ENCODE measurements at regions of chr22 and their contacts with region 1.

Region 1: GRCh38 chr22:32823024-32823730 is 21.7 kb downstream of the TIMP3 start:
- DNase-seq: no peak
- ATAC-seq: no peak
- H3K4me3 ChIP-seq: no peak overlapping the region
- H3K27ac ChIP-seq: peak overlapping the region in 6 of 10 donors; percentile 10 to 74 (median 36)
- H3K4me1 ChIP-seq: peaks cover 53 to 99% (median 92%) of the 10 kb centered on the region in 9 donors
- H3K27me3 ChIP-seq: no peaks in the 10 kb centered on the region
- CTCF ChIP-seq: peak in 7 of 9 donors; percentile 44 to 67 (median 45)

Region 2: DNA sequence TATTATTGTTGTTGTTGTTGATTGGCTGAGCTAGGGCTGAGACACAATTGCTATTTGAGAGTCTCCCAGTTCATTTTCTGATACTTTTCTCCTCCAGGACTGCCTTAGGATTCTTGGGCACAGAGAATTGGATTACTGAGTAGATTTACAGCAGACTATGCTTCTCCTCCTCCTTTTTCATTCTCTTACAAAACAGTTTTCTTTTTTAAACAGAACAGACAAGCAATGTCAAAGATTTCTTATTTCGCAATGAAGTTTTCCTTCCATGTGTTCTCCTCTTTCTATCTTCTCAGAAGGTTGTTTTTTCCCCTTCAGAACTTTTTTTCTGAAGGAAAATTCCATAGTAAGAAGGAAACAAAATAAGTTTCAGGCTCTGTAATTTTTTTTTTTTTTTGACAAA is 41.5 kb before region 1 on chr22:
- intact Hi-C with region 1: no loop called
- DNase-seq: no peak
- ATAC-seq: peak in 1 of 8 donors; percentile 20
- H3K4me3 ChIP-seq: no peak overlapping the region
- H3K27ac ChIP-seq: no peak overlapping the region
- H3K4me1 ChIP-seq: peaks cover 0 to 9% (median 0%) of the 10 kb centered on the region in 9 donors
- H3K27me3 ChIP-seq: no peaks in the 10 kb centered on the region
- CTCF ChIP-seq: no peak

Region 3: GRCh38 chr22:32800994-32801942 is 21.9 kb before region 1 on chr22 and contains the start of gene TIMP3:
- intact Hi-C with region 1: no loop called
- DNase-seq: peak; percentile 92 to 94
- ATAC-seq: peak; percentile 86 to 93 (median 90)
- H3K4me3 ChIP-seq: peak within 1 kb of the TSS; percentile 78 to 100 (median 97)
- H3K27ac ChIP-seq: peak within 1 kb of the TSS; percentile 84 to 96 (median 90)
- H3K4me1 ChIP-seq: peaks cover 6 to 69% (median 44%) of the 10 kb centered on the region in 9 donors
- H3K27me3 ChIP-seq: peaks cover 0 to 24% (median 0%) of the 10 kb centered on the region in 7 donors
- CTCF ChIP-seq: peak in 3 of 9 donors; percentile 20 to 27 (median 22)
- total RNA-seq, gene TIMP3: 91.9 to 380 (median 166) TPM

Region 4: GRCh38 chr22:32850591-32851517 is 27.7 kb after region 1 on chr22:
- intact Hi-C with region 1: loop called in 1 of 10 experiments (anchors 5 kb)
- DNase-seq: peak; percentile 78 to 80
- ATAC-seq: peak; percentile 20 to 73 (median 60)
- H3K4me3 ChIP-seq: no peak overlapping the region
- H3K27ac ChIP-seq: peak overlapping the region; percentile 67 to 90 (median 73)
- H3K4me1 ChIP-seq: peaks cover 59 to 100% (median 99%) of the 10 kb centered on the region in 9 donors
- H3K27me3 ChIP-seq: no peaks in the 10 kb centered on the region
- CTCF ChIP-seq: no peak

Region 5: GRCh38 chr22:32880061-32880460 is 56.9 kb after region 1 on chr22:
- intact Hi-C with region 1: no loop called
- DNase-seq: no peak
- ATAC-seq: peak in 1 of 8 donors; percentile 21
- H3K4me3 ChIP-seq: no peak overlapping the region
- H3K27ac ChIP-seq: no peak overlapping the region
- H3K4me1 ChIP-seq: peaks cover 4 to 29% (median 14%) of the 10 kb centered on the region in 9 donors
- H3K27me3 ChIP-seq: peaks cover 0 to 4% (median 0%) of the 10 kb centered on the region in 7 donors
- CTCF ChIP-seq: no peak

Region 6: DNA sequence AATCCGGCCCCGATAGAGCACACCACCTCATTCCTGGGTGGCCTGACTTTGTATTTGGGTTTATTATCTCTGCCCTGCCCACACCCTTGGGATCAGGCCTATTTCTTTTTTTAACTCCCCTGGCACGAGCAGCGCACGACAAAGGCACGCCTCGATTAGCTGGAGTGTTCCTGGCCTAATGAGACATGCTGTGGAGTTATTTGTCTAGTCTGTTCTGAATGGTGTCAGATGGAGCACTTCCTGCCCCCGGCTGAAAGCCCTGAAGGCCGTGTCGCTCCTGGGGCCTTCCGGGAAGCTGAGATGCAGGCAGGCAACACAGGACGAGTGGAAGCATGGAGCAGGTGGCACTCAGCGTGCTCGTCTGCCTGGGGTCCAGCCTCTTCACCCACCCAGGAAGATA is 1050.0 kb after region 1 on chr22:
- intact Hi-C with region 1: loop called in 1 of 10 experiments (anchors 5 kb)
- DNase-seq: peak; percentile 48 to 72
- ATAC-seq: peak; percentile 69 to 94 (median 84)
- H3K4me3 ChIP-seq: peak overlapping the region in 3 of 10 donors; percentile 15 to 21 (median 19)
- H3K27ac ChIP-seq: peak overlapping the region in 9 of 10 donors; percentile 57 to 88 (median 73)
- H3K4me1 ChIP-seq: peaks cover 21 to 82% (median 49%) of the 10 kb centered on the region in 9 donors
- H3K27me3 ChIP-seq: no peaks in the 10 kb centered on the region
- CTCF ChIP-seq: no peak